ENCODE measurements at regions of chr12 and their contacts with region 1.

Region 1: DNA sequence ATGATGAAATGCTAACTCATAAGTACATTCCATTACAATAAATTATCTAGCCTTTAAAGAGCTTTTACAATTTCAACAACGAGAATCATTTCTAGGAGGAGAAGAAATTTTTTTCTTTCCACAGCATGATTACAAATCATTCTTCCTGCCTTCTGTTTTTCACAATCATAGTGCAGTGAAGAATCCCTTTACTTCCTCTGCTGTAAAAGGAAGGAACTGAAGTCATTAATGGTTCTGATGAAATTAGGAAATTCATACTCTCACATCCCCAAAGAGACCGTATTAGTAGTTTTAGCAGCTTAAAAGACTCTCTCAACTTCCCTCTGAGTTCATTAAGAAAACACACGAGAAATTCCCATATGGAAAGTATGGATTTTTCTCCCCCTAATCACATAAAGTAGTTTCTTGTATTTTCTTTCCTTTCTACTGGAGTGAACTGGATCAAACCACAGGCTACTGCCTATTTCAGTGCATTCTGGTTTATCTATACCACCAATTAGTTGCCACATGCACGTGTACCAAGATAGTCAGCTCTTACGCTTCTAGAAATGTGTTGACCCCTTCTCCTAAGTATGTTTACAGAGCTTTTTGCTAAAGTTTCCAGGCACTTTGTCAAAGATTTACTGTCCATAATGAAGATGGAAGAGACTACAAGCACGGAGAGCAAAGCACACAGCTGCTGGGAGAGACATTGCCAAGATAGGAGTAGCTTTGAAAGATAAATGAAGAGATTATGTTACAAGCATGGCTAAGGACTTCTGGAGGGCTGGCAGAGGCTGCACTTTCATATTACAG is 58.9 kb upstream of the KITLG start:
- DNase-seq: no peak
- H3K4me3 ChIP-seq: no peak overlapping the region
- H3K4me3 Mint-ChIP-seq: no peak overlapping the region
- H3K27ac Mint-ChIP-seq: no peak overlapping the region
- H3K4me1 ChIP-seq: no peaks in the 10 kb centered on the region; the same call in 1 of the 2 replicates
- H3K4me1 Mint-ChIP-seq: peaks cover 14% of the 10 kb centered on the region
- H3K27me3 ChIP-seq: no peaks in the 10 kb centered on the region
- H3K27me3 Mint-ChIP-seq: no peaks in the 10 kb centered on the region
- CTCF ChIP-seq: no peak

Region 2: DNA sequence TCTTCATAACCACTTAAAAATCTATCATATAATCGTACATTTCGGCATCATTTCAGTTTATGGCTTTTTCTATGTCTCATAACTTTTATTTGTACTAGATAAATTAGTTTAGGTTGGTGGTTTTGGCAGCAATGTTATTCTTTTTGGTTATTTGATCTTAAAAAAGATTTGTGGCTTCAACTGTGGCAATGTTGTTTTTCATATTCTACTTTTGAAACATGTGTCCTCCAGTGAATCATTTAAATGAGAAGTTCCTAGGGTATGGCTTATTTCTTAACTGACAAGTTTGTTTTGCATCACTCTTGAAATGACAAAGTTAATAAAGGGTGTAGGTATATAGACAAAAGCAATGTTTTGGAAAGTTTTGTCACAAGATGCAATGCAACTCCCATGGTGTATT is 47.8 kb before region 1 on chr12:
- CTCF ChIA-PET with region 1: no interaction called
- POLR2A ChIA-PET with region 1: no interaction called
- intact Hi-C with region 1: no loop called
- DNase-seq: no peak
- H3K4me3 ChIP-seq: no peak overlapping the region
- H3K4me3 Mint-ChIP-seq: no peak overlapping the region
- H3K27ac Mint-ChIP-seq: no peak overlapping the region
- H3K4me1 ChIP-seq: peaks cover 3% of the 10 kb centered on the region; the same call in 1 of the 2 replicates
- H3K4me1 Mint-ChIP-seq: no peaks in the 10 kb centered on the region
- H3K27me3 ChIP-seq: no peaks in the 10 kb centered on the region
- H3K27me3 Mint-ChIP-seq: no peaks in the 10 kb centered on the region
- CTCF ChIP-seq: no peak

Region 3: GRCh38 chr12:88615490-88615889 is 23.7 kb before region 1 on chr12:
- CTCF ChIA-PET with region 1: no interaction called
- POLR2A ChIA-PET with region 1: no interaction called
- intact Hi-C with region 1: no loop called
- DNase-seq: no peak
- H3K4me3 ChIP-seq: no peak overlapping the region
- H3K4me3 Mint-ChIP-seq: no peak overlapping the region
- H3K27ac Mint-ChIP-seq: no peak overlapping the region
- H3K4me1 ChIP-seq: no peaks in the 10 kb centered on the region
- H3K4me1 Mint-ChIP-seq: no peaks in the 10 kb centered on the region
- H3K27me3 ChIP-seq: no peaks in the 10 kb centered on the region
- H3K27me3 Mint-ChIP-seq: no peaks in the 10 kb centered on the region
- CTCF ChIP-seq: no peak

Region 4: DNA sequence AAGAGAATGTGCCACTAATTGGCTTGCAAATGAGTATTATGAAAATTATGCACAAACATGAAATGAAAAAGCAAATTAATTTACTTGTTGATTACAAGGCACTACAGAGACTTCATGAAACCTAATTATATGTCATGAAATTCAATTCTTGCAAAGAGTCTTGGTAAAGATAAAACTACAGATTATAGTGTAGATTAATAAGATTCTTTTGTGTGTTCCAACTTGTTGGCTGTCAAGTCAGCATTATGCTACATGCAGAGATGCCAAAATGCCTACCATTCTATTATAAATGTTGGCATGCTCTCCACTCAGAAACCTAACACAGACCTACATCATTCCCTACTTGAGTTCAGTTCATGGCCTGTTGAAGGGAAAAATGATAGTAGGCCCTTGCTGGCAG is 38.3 kb after region 1 on chr12:
- CTCF ChIA-PET with region 1: no interaction called
- POLR2A ChIA-PET with region 1: no interaction called
- intact Hi-C with region 1: no loop called
- DNase-seq: no peak
- H3K4me3 ChIP-seq: no peak overlapping the region
- H3K4me3 Mint-ChIP-seq: no peak overlapping the region
- H3K27ac Mint-ChIP-seq: no peak overlapping the region
- H3K4me1 ChIP-seq: no peaks in the 10 kb centered on the region
- H3K4me1 Mint-ChIP-seq: no peaks in the 10 kb centered on the region
- H3K27me3 ChIP-seq: no peaks in the 10 kb centered on the region
- H3K27me3 Mint-ChIP-seq: no peaks in the 10 kb centered on the region
- CTCF ChIP-seq: no peak

Region 5: GRCh38 chr12:88922816-88923215 is 283.7 kb after region 1 on chr12:
- CTCF ChIA-PET with region 1: no interaction called
- POLR2A ChIA-PET with region 1: no interaction called
- intact Hi-C with region 1: loop called (anchors 10 kb)
- DNase-seq: no peak
- H3K4me3 ChIP-seq: no peak overlapping the region
- H3K4me3 Mint-ChIP-seq: no peak overlapping the region
- H3K27ac Mint-ChIP-seq: no peak overlapping the region
- H3K4me1 ChIP-seq: peaks cover 61% of the 10 kb centered on the region
- H3K4me1 Mint-ChIP-seq: peaks cover 47% of the 10 kb centered on the region
- H3K27me3 ChIP-seq: no peaks in the 10 kb centered on the region
- H3K27me3 Mint-ChIP-seq: no peaks in the 10 kb centered on the region
- CTCF ChIP-seq: no peak

Measured in Caco-2 (cell line).